ENCODE measurements at regions of chr5 and their contacts with region 1.

Region 1: DNA sequence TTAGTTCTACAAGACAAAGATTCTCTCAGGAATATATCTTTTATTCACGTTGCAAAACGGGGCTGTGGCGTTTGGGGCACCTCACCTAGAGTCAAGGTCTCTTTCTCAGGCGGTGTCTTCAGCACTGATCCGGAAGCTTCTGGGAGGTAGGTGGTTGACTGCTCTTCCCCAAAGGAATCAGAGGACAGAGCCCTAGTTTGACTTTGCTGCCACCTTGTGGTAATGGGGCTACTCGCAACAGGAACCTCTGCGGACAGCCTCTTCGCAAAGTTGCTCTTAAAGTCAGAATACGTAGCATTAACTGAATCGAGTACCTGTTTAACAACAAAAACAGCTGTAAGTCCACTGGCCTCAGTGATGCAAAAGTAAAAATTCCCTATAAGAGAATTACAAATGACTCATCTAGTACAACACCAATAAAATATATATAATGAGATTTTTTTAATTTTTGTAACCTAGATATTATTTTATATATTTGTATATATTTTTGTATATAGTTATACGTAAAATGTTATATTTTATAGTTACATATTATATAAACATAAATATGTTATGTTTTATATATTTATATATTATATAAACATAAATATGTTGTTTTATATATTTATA is 13.3 kb upstream of the GPX8 start:
- DNase-seq: peak; percentile 54 to 89 (median 80)
- ATAC-seq: peak; percentile 90 to 98
- H3K4me3 Mint-ChIP-seq: peak overlapping the region in 6 of 10 donors; percentile 34 to 62 (median 44)
- H3K27ac Mint-ChIP-seq: peak overlapping the region in 2 of 10 donors; percentile 5 to 44
- H3K4me1 Mint-ChIP-seq: peaks cover 10 to 23% (median 17%) of the 10 kb centered on the region in 4 donors
- H3K27me3 Mint-ChIP-seq: peaks cover 0 to 4% (median 2%) of the 10 kb centered on the region in 5 donors

Region 2: DNA sequence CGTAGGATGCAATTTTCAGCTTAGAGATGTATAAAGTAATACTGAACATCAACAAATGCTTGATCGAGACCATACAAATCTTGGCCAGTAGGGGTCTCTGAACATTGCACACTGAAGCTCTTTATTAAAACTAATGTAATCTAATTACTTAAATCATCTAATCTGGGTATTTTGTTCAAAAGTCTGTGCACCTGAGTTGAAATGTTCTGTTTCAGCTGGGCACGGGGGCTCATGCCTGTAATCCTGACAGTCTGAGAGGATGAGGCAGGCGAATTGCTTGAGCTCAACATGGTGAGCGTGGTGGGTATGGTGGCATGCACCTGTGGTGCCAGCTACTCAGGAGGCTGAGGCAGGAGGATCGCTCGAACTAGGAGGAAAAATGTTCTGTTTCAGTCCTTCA is 202.3 kb before region 1 on chr5:
- POLR2A ChIA-PET with region 1: interaction called, 13 read pairs
- DNase-seq: peak in 8 of 10 donors; percentile 22 to 69 (median 47)
- ATAC-seq: peak; percentile 49 to 56
- H3K4me3 Mint-ChIP-seq: no peak overlapping the region
- H3K27ac Mint-ChIP-seq: no peak overlapping the region
- H3K4me1 Mint-ChIP-seq: peaks cover 0 to 2% (median under 1%) of the 10 kb centered on the region in 4 donors
- H3K27me3 Mint-ChIP-seq: no peaks in the 10 kb centered on the region

Region 3: GRCh38 chr5:55134053-55134722 is 12.5 kb before region 1 on chr5:
- POLR2A ChIA-PET with region 1: no interaction called
- DNase-seq: peak in 2 of 10 donors; percentile 6 to 12
- ATAC-seq: peak; percentile 42 to 59
- H3K4me3 Mint-ChIP-seq: peak overlapping the region in 6 of 10 donors; percentile 5 to 40 (median 22)
- H3K27ac Mint-ChIP-seq: peak overlapping the region in 4 of 10 donors; percentile 8 to 79 (median 40)
- H3K4me1 Mint-ChIP-seq: peaks cover 7 to 20% (median 18%) of the 10 kb centered on the region in 4 donors
- H3K27me3 Mint-ChIP-seq: no peaks in the 10 kb centered on the region

Region 4: DNA sequence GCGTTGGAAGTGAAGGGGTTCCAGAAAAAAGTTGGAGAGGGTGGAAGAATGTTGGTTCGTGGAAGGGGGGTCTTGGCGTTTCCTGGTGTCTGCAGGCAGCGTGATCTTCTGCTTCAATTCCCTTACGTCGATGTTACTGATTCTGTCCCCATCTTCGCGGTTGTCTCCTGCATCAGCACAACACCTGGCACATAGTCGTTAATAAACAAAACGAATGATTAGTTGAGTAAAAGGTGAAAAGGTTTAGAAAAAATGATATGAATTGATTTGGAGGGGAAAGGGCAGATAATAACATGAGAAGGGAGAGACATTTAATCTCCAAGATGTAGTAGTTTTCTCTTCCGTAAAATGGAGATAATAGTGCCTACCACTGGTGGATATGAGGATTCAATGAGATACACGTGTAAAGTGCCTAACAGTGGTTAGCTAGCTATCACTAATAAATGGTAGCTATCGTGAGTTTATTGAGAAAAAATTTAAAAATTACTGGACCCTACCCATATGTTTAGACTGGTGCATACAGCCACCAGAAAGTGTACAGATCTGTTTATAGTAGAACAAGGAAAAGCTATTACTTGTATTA is 161.7 kb after region 1 on chr5:
- POLR2A ChIA-PET with region 1: no interaction called
- DNase-seq: peak in 2 of 10 donors; percentile 2 to 14
- ATAC-seq: peak in 1 of 2 donors; percentile 16
- H3K4me3 Mint-ChIP-seq: no peak overlapping the region
- H3K27ac Mint-ChIP-seq: no peak overlapping the region
- H3K4me1 Mint-ChIP-seq: peaks cover 12 to 37% (median 32%) of the 10 kb centered on the region in 4 donors
- H3K27me3 Mint-ChIP-seq: no peaks in the 10 kb centered on the region

Measured in naive thymus-derived CD8-positive, alpha-beta T cell (primary cell).